Endothelial cell of umbilical vein (primary cell): ENCODE measurements at regions of chr14 and their contacts with region 1.

Region 1: DNA sequence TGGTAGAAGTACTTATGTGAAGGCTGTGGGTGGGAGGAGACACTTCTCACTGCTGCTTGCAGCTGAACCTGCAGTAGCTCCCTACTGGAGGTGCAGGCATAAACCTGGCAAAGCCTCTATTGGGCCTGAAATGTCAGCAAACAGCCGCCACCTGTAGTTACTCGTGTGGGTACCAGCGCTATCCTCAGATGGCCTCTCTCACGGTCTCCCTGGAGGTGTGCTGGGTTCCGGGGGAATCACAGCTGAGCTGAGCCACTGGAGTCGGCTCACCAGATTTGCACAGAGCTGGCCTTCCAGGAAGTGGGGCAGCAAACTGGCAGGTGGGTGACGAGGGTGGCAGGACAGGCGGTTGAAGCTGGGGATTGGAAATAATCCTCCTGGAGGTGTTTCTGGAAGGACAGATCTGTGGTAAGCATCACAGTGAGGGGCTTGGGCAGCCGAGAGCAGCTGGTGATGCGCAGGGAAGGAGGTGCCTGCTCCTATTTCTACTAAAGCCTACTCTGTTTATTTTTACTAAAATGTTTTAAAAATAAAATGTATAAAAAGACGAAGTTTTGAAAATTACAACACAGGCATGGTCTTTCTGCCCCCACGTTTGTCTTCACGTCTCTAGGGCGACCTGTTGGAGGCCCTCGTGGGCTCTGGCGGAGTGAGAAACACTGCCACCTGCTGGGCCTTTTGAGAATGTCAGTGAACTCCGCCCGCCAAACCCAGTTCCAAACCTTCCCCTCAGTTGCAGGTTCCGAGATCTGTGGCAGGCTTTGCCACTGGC is 67.8 kb upstream of the PLEKHG3 start:
- DNase-seq: peak; percentile 65
- H3K4me3 ChIP-seq: no peak overlapping the region
- H3K27ac ChIP-seq: no peak overlapping the region
- H3K4me1 ChIP-seq: no peaks in the 10 kb centered on the region
- H3K27me3 ChIP-seq: no peaks in the 10 kb centered on the region
- CTCF ChIP-seq: peak; percentile 81 to 86
- POLR2A ChIP-seq: no peak

Region 2: GRCh38 chr14:64324895-64325294 is 311.5 kb before region 1 on chr14:
- CTCF ChIA-PET with region 1: no interaction called
- POLR2A ChIA-PET with region 1: no interaction called
- dilution Hi-C with region 1: no loop called
- intact Hi-C with region 1: no loop called
- DNase-seq: no peak
- H3K4me3 ChIP-seq: no peak overlapping the region
- H3K27ac ChIP-seq: no peak overlapping the region
- H3K4me1 ChIP-seq: no peaks in the 10 kb centered on the region
- H3K27me3 ChIP-seq: no peaks in the 10 kb centered on the region
- CTCF ChIP-seq: no peak
- POLR2A ChIP-seq: no peak

Region 3: DNA sequence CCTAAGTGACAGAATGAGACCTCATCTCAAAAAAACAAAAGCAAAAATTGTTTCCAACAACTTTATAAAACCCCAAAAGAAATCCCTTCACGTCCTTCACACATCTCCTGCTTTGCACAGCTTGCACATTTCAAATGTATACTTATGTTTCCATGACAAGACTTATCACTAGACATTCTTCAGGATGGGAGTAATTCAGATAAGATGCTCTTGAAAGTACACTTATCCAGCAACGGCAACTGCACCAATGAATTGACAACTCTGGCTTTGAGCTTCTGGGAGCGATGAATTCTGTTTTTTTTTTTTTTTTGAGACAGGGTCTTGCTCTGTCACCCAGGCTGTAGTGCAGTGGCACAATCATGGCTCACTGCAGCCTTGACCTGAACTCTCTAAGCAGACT is 201.9 kb before region 1 on chr14:
- CTCF ChIA-PET with region 1: interaction called, 21 read pairs
- POLR2A ChIA-PET with region 1: no interaction called
- dilution Hi-C with region 1: no loop called
- intact Hi-C with region 1: loop called (anchors 1 kb)
- DNase-seq: no peak
- H3K4me3 ChIP-seq: no peak overlapping the region
- H3K27ac ChIP-seq: no peak overlapping the region
- H3K4me1 ChIP-seq: peaks cover 16% of the 10 kb centered on the region
- H3K27me3 ChIP-seq: no peaks in the 10 kb centered on the region
- CTCF ChIP-seq: no peak
- POLR2A ChIP-seq: no peak

Region 4: GRCh38 chr14:64510825-64511671 is 125.3 kb before region 1 on chr14:
- CTCF ChIA-PET with region 1: interaction called, 17 read pairs
- POLR2A ChIA-PET with region 1: no interaction called
- dilution Hi-C with region 1: no loop called
- intact Hi-C with region 1: no loop called
- DNase-seq: peak; percentile 72
- H3K4me3 ChIP-seq: no peak overlapping the region
- H3K27ac ChIP-seq: no peak overlapping the region
- H3K4me1 ChIP-seq: peaks cover 21% of the 10 kb centered on the region
- H3K27me3 ChIP-seq: no peaks in the 10 kb centered on the region
- CTCF ChIP-seq: peak; percentile 78 to 84
- POLR2A ChIP-seq: no peak

Region 5: DNA sequence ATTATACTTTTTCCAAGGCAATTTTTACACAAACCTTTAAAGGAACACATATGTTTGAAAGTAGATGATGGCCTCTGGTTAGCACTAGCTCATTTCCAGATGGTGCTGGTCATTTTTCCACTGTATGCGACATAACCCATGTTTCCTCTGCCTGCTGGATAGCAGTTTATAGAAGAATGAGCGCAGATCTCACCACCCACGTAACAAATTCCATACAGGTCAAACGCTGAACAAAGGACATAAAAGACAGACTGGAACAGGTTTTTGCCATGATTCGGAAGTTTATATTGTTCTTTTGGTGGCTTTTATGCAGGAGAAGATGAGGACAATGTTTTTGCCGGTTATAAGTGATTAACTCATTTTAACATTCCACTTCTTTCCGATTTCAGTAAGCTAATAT is 55.9 kb before region 1 on chr14:
- CTCF ChIA-PET with region 1: no interaction called
- POLR2A ChIA-PET with region 1: no interaction called
- dilution Hi-C with region 1: no loop called
- intact Hi-C with region 1: loop called (anchors 5 kb)
- DNase-seq: peak; percentile 44
- H3K4me3 ChIP-seq: no peak overlapping the region
- H3K27ac ChIP-seq: no peak overlapping the region
- H3K4me1 ChIP-seq: peaks cover 7% of the 10 kb centered on the region
- H3K27me3 ChIP-seq: no peaks in the 10 kb centered on the region
- CTCF ChIP-seq: no peak
- POLR2A ChIP-seq: no peak

Region 6: DNA sequence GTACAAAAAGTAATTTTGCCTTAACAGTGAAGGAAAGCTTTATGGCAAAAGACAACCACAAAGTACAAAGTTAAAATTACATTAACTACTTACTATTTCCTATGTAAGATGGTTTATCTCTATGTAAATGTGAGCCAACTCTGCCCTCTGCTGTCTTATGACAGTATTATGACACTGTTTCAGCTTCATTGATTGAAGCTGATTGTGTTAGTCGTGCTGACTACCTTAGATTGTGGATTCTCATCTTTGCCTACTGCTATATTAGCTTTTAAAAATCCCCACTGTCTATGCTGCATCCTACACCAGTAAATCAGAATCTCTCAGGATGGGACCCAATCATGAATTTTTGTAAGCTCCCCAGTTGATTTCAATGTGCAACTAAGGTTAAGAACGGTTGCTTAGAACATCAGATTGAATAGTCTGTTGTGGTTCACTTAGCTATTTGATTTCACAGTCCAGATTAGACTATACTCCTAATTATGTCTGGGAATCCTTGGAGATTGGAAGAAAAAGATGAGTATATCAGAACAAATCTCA is 255.5 kb after region 1 on chr14:
- CTCF ChIA-PET with region 1: interaction called, 12 read pairs
- POLR2A ChIA-PET with region 1: no interaction called
- dilution Hi-C with region 1: no loop called
- intact Hi-C with region 1: no loop called
- DNase-seq: peak; percentile 72
- H3K4me3 ChIP-seq: no peak overlapping the region
- H3K27ac ChIP-seq: no peak overlapping the region
- H3K4me1 ChIP-seq: no peaks in the 10 kb centered on the region
- H3K27me3 ChIP-seq: peaks cover 10 to 24% of the 10 kb centered on the region in 2 experiments
- CTCF ChIP-seq: peak; percentile 31 to 42
- POLR2A ChIP-seq: no peak